Heart left ventricle (tissue), 16 donors: ENCODE measurements at regions of chr3 and their contacts with region 1.

Region 1: GRCh38 chr3:37114251-37115145 is 59.9 kb downstream of the LRRFIP2 start:
- DNase-seq: no peak
- ATAC-seq: no peak
- H3K4me3 ChIP-seq: no peak overlapping the region
- H3K27ac ChIP-seq: peak overlapping the region in 1 of 12 donors; percentile 11
- H3K4me1 ChIP-seq: peaks cover 0 to 38% (median 10%) of the 10 kb centered on the region in 12 donors
- H3K27me3 ChIP-seq: no peaks in the 10 kb centered on the region
- CTCF ChIP-seq: no peak
- POLR2A ChIP-seq: no peak

Region 2: DNA sequence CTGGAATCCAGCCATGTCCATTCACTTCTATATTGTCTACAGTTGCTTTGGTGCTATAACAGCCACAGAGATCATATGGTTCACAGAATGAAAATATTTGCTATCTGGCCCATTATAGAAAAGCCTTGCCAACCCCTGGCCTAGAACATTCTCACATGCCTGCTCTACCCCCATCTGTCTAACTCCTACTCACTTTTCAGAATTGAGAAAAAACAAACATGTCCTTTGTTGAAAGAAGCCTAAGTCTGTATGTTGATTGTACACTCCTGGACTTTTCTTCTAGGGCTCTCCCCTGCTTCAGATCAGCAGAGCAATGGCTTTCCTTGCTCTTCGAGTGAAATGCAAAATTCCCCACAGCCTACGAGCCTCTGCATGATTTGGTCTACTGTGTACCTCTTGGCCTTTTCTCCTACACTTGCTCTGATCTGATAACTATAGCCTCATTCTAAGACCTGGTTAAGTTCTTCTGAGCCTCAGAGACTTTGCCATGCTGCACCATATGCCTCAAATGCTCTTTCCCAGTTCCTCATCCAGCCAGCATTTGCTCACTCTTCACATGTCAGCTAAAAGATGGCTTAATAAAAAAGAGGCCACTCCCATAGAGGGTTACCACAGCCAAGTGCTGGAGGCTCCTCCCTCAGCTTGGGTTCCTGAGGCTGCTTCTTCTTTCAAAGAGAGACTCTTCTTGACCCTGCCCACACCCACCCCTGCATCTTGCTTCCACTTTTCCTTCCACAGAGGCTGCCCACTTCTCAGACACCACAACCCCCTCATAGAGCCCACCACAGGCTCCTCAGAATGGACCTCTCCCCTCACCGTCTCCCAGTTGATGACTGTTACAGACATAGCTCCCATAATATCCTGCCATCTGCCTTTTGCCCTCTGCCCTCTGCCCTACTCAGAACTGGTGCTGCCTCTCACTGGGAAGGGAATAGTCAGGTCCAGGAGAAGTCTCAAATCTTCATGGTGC is 327.3 kb before region 1 on chr3:
- intact Hi-C with region 1: no loop called
- DNase-seq: peak in 2 of 5 donors; percentile 26 to 29
- ATAC-seq: peak in 3 of 4 donors; percentile 30 to 80 (median 37)
- H3K4me3 ChIP-seq: no peak overlapping the region
- H3K27ac ChIP-seq: peak overlapping the region in 1 of 12 donors; percentile 35
- H3K4me1 ChIP-seq: peaks cover 0 to 12% (median 5%) of the 10 kb centered on the region in 12 donors
- H3K27me3 ChIP-seq: no peaks in the 10 kb centered on the region
- CTCF ChIP-seq: no peak
- POLR2A ChIP-seq: no peak

Region 3: DNA sequence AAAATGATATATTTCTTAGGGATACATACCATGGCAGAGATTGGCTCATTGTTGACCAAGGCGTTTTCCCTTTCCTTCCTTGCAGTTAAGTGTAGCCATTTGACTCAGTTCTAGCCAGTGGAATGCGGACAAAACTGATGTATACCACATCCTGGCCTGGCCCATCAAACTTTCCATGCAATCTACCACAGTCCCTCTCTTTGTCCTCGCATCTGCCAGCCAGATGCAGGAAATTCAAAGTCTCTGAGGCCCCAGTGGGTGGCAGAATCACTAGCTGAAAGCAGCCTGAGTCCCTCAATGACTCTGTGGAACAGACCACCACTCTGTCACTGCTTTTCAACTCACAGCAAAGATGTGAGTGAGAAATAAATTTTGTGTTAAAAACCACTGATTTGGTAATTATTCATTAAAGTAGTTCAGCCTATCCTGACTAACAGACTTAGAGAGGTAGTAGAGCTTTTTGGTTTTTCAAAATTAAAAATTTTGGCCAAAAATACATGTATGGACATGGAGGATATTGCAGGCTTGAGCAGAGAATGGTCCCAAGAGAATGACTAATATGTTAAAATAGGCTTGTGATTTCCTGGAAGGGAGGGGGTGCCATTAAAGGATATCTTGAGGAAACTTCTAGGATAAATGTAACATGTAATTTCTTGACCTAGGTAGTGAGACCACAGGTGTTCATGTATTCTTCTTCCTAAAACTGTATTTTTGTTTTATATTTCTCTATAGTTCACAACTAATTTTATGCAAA is 48.9 kb after region 1 on chr3:
- intact Hi-C with region 1: loop called in 1 of 10 experiments (anchors 5 kb)
- DNase-seq: no peak
- ATAC-seq: no peak
- H3K4me3 ChIP-seq: no peak overlapping the region
- H3K27ac ChIP-seq: peak overlapping the region in 3 of 12 donors; percentile 12 to 43 (median 22)
- H3K4me1 ChIP-seq: peaks cover 0 to 16% (median 9%) of the 10 kb centered on the region in 12 donors
- H3K27me3 ChIP-seq: no peaks in the 10 kb centered on the region
- CTCF ChIP-seq: no peak
- POLR2A ChIP-seq: no peak

Region 4: GRCh38 chr3:37174532-37175126 is 60.1 kb after region 1 on chr3 and contains the start of gene LRRFIP2:
- intact Hi-C with region 1: loop called in 1 of 10 experiments (anchors 5 kb)
- DNase-seq: no peak
- ATAC-seq: no peak
- H3K4me3 ChIP-seq: peak within 1 kb of the TSS; percentile 86 to 99 (median 96)
- H3K27ac ChIP-seq: peak within 1 kb of the TSS; percentile 88 to 99 (median 98)
- H3K4me1 ChIP-seq: peaks cover 6 to 79% (median 57%) of the 10 kb centered on the region in 12 donors
- H3K27me3 ChIP-seq: no peaks in the 10 kb centered on the region
- CTCF ChIP-seq: no peak
- POLR2A ChIP-seq: no peak
- total RNA-seq, gene LRRFIP2: 85.5 to 161 (median 114) TPM